Left cardiac atrium (tissue), 4 donors: ENCODE measurements at regions of chr7 and their contacts with region 1.

Region 1: DNA sequence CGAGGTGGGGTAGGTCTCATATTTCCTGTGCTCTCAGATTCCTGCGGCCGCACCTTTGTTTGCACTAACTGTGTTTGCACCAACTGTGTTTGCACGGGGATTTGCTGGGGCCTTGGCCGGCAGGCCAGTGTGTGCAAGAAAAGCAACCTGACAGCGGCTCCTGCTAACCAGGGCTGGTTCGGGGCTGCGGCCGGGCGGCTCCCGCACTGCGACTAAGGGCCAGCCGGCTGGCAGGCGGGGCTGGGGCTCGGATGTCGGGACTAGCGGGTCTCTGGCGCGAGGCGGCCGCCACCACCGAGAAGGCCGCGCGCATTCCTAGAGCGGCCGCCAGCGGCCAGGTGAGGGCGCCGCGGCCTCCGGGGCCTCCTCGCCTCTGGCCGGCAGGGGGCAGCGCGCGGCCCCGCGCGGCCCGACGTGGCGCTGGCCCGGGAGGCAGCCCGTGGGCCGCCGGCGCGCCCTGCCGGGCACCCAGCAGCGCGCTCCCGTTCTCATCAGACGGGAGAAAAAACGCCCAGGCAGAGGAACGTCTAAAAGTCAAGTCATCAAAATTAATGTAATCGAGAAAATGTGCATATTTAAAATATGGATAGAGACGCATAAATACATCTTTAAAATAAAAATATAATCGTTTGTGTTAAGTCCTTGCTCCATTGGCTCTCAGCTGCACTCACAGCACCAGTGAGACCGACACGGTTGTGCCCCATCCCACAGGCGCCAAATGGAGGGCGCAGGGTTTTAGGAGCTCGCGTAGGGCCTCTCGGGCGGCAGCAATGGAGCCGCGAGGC is 38.5 kb downstream of the ZNF777 start:
- DNase-seq: peak; percentile 65
- ATAC-seq: peak; percentile 95 to 97

Region 2: GRCh38 chr7:149229526-149229925 is 192.8 kb before region 1 on chr7:
- intact Hi-C with region 1: no loop called
- DNase-seq: no peak
- ATAC-seq: no peak

Region 3: GRCh38 chr7:149261829-149262617 is 160.3 kb before region 1 on chr7 and contains the start of gene ZNF783:
- intact Hi-C with region 1: loop called in 1 of 2 experiments (anchors 10 kb)
- DNase-seq: peak; percentile 92
- ATAC-seq: peak; percentile 97 to 98
- total RNA-seq, gene ZNF783: 5.8 to 8.6 TPM

Region 4: DNA sequence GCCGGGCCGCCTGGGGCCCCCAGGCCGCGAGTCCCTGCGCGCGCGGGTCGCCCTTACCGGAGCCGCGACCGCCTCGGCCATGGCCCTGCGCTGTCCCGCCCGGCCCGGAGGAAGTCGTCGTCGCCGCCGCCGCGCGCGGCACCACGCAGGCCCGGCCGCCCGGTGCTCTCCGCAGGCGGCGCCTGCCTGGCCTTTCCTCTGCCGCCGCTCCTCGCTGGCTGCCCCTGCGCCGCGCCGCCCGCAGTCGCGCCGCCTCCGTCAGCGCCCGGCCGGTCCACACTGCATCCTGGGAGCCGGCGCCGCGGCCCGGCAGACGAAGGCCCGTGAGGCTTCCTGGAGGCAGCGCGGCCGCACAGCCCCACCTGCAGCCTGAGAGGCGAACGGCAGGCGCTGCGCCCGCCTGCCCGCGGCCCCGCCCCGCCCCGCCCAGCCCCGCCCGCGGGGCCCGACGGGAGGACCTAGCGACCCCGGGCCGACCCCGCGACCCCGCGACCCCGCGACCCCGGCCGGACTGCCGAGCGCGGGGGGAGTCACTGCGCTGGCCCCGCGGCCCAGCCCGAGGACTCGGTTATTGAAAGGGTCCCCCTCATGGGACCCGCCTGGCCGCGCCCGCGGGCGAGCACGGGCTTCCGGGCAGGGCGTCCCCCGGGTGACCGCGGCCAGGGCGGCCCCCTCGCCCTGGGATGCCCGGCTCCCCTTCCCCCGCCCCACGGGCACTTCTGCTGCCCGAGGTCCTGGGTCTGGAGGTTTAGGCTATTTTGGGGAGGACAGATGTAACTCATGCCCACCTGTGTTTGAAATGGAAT is 75.3 kb after region 1 on chr7 and contains the start of gene ZNF746:
- intact Hi-C with region 1: loop called in 1 of 2 experiments (anchors 5 kb)
- DNase-seq: peak; percentile 90
- ATAC-seq: peak; percentile 92
- total RNA-seq, gene ZNF746: 8.7 to 10.1 TPM